GM13976 (cell line): ENCODE measurements at regions of chr3 and their contacts with region 1.

Region 1: DNA sequence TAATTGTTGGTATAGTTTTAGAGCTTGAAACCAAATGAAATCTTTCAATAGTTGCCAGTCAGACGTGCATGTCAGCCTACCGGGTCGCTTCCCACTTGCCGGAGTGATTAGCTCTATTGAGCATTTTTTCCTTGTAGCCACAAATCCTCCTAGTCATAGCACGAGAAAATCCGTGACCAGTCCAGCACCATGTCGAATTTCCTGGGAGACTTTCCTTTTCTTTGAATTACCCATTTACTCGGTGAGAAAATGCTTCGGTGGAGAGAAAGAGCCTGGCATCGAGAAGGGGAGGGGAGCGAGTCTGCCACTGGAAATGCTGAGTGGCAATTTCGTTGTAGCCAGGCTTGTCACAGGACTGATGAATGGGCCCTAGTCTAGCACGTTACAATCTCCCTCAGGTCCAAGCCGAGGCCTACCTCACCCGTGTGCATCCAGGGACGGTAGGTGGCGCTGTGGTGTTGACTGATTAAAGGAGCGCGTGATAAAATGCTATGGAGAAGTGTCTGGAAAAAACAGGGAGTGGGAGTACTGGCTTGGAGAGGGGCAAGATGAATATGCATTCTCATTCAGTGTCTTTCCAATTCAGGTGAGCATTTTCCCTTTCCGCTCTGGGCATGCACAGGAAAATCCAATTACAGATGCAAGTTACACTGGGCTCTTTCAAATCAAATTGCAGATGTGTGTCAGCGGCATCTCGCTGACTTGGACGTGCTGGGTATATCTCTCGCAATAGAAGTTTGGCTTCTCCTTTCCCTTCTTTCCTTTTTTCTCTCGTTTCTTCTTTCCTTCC is 238.8 kb downstream of the EDEM1 start:
- DNase-seq: peak; percentile 45
- CTCF ChIP-seq: peak; percentile 93

Region 2: GRCh38 chr3:5731094-5731493 is 304.8 kb after region 1 on chr3:
- in situ Hi-C with region 1: loop called (anchors 25 kb)
- DNase-seq: peak; percentile 12
- CTCF ChIP-seq: no peak